ENCODE measurements at regions of chr3 and their contacts with region 1.

Region 1: DNA sequence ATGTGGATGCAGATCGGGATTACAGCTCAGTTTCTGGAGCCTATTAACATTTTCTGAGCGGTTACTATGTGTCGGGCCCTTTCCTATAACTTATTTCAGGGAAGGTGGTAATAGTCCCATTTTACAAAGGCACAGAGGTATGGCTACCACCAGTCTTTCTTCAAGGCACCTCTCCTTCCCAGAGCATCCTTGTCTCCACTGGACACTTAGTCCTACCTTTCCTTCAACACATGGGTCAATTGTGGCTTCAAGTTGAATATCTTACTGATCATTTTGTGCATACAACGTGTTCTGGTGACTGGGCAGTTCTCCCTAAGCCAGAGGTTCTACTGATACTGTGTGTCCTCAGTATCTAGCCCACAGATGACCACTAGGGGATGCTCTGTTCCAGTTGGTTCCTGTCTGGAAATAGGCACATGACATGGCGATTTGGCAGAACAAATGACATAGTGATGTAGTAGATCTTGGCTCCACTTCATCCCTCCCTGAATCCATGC is 60.7 kb upstream of the CMTM8 start:
- DNase-seq: peak in 4 of 5 donors; percentile 64 to 76 (median 69)
- ATAC-seq: peak; percentile 82 to 93 (median 92)
- H3K4me3 ChIP-seq: no peak overlapping the region
- H3K27ac ChIP-seq: no peak overlapping the region
- H3K4me1 ChIP-seq: peaks cover 0 to 12% (median 7%) of the 10 kb centered on the region in 12 donors
- H3K27me3 ChIP-seq: no peaks in the 10 kb centered on the region
- CTCF ChIP-seq: peak; percentile 67 to 82 (median 76)
- POLR2A ChIP-seq: no peak

Region 2: DNA sequence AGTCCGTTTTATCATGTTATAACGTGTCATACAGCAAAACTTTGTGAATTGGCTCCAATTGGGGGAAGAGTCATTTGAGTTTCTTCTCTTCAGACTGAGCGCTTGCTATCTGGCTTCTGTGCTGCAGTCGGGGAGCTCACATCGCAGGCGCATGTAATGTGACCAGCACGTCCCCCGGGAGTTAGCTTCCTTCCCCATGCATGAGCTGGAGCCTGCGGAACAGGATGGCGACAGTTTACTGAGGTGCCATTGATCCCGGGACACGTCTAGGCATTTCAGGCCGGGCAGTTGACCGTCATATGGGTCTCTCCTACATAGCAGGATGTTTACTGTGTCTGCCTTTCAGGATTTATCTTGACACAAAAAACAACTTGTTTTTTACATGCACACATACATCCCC is 105.6 kb after region 1 on chr3:
- intact Hi-C with region 1: loop called in 1 of 10 experiments (anchors 5 kb)
- DNase-seq: peak; percentile 65 to 79 (median 78)
- ATAC-seq: peak in 3 of 4 donors; percentile 67 to 90 (median 71)
- H3K4me3 ChIP-seq: no peak overlapping the region
- H3K27ac ChIP-seq: peak overlapping the region in 10 of 12 donors; percentile 0 to 61 (median 32)
- H3K4me1 ChIP-seq: peaks cover 0 to 42% (median 10%) of the 10 kb centered on the region in 12 donors
- H3K27me3 ChIP-seq: no peaks in the 10 kb centered on the region
- CTCF ChIP-seq: no peak
- POLR2A ChIP-seq: no peak

Region 3: DNA sequence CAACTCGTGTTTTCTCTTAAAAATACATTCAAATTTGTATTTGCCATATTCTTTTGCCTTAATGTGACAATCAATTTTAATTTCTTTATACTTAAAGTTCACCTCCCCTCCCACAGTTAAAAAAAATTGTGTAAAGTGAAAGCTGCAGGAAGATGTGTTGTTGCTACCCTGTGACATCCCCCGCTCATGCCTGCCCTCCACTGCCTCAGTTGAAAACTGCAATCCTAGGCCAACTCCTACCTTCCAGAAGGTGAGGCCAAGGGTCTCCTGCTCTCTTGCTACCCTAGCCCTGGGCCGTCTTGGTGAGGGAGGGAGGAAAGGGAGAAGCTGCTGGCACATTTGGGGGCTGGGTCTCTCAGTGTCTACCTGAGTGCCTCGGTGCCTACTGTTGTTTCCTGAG is 156.9 kb after region 1 on chr3:
- intact Hi-C with region 1: loop called in 1 of 10 experiments (anchors 5 kb)
- DNase-seq: no peak
- ATAC-seq: no peak
- H3K4me3 ChIP-seq: no peak overlapping the region
- H3K27ac ChIP-seq: no peak overlapping the region
- H3K4me1 ChIP-seq: peaks cover 0 to 16% (median 0%) of the 10 kb centered on the region in 12 donors
- H3K27me3 ChIP-seq: no peaks in the 10 kb centered on the region
- CTCF ChIP-seq: no peak
- POLR2A ChIP-seq: no peak

Region 4: DNA sequence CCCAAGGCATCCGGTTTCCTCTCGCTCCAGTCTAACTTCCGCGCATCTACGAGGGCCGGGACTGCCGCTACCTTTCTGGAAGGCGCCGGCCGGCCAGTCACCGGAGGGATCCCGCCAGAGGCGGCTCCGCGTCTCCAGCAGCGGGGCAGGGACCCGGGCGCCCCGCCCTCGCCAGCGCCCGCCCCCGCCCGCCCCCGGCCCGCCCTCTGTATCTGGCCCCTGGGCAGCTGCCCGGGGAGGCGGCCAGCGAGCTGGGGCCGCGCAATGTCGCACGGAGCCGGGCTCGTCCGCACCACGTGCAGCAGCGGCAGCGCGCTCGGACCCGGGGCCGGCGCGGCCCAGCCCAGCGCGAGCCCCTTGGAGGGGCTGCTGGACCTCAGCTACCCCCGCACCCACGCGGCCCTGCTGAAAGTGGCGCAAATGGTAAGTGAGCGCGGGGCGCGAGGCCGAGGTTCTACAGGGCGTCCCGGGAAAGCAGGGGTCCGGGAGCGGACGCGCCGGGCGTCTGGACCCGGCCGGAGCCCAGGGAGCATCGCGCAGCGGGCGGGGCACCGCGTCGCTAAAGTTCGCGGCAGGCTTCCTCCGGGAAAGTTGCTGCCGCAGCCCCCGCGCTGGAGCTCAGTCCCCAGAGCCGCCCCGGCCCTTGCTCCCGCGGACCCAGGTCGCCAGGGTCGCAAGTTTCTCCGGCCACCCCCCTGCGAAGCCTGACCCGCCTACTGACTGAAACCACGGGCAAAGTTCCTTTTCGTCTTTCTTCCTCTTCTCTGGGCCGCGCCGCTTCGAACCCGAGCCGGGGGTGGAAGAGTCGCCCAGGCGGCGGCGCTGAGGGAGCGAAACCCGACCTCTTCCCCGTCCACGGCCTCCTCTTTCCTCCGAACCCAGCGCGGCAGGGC is 214.1 kb after region 1 on chr3 and contains the start of gene CMTM7:
- intact Hi-C with region 1: loop called in 4 of 10 experiments (anchors 5 to 10 kb)
- DNase-seq: peak; percentile 73 to 87 (median 75)
- ATAC-seq: peak; percentile 60 to 94 (median 87)
- H3K4me3 ChIP-seq: peak within 1 kb of the TSS; percentile 51 to 98 (median 77)
- H3K27ac ChIP-seq: peak within 1 kb of the TSS; percentile 14 to 95 (median 84)
- H3K4me1 ChIP-seq: peaks cover 0 to 43% (median 9%) of the 10 kb centered on the region in 12 donors
- H3K27me3 ChIP-seq: no peaks in the 10 kb centered on the region
- CTCF ChIP-seq: no peak
- POLR2A ChIP-seq: peak in 1 of 2 donors; percentile 67
- total RNA-seq, gene CMTM7: 2.3 to 16.8 (median 3.6) TPM

Region 5: DNA sequence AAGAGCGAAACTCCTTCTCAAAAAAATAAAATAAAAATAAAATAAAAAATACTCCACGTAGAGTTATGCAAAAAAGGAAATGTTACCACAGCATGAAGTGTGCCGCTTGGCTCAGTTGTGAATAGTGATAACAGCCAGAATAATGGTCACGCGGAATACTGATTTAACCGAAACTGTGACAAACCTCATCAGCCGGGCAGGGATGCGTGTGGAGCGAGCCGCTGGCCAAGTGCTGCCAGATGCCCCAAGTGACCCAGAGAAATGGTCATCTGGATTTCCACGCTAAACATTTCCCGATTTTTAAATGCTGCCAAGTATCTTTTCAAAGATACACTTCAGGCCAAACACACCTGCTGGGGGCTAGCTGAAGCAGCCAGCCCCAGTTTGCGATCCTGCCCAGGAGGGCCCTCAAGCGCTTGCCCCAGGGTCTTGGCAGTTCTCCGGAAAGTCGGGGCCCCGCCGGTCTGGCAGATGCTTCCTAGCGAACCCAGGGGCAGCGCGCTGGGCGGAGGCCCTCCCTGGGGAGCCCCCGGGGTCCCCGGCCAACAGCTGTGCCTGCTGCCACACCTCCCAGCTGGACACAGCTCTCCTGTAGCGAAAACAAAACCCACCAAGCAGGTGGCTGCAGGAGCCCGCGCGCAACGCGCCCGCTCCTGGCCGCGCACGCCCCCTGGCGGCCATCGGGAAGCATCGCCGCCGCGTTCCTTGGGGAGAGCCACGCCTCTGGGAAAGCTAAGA is 289.8 kb after region 1 on chr3:
- intact Hi-C with region 1: loop called in 9 of 10 experiments (anchors 5 to 10 kb)
- DNase-seq: peak; percentile 59 to 89 (median 68)
- ATAC-seq: peak; percentile 40 to 94 (median 88)
- H3K4me3 ChIP-seq: peak overlapping the region in 10 of 12 donors; percentile 25 to 57 (median 46)
- H3K27ac ChIP-seq: peak overlapping the region in 2 of 12 donors; percentile 35 to 51
- H3K4me1 ChIP-seq: peaks cover 0 to 36% (median 9%) of the 10 kb centered on the region in 12 donors
- H3K27me3 ChIP-seq: no peaks in the 10 kb centered on the region
- CTCF ChIP-seq: peak; percentile 98 to 100 (median 99)
- POLR2A ChIP-seq: peak in 1 of 2 donors; percentile 15

Measured in heart left ventricle (tissue), 16 donors.